ENCODE measurements at regions of chr17 and their contacts with region 1.

Region 1: GRCh38 chr17:42760652-42761581 is at the start of gene RAMP2:
- DNase-seq: no peak
- H3K4me3 ChIP-seq: peak within 1 kb of the TSS; percentile 47 to 58
- H3K27ac ChIP-seq: peak within 1 kb of the TSS; percentile 17 to 45
- H3K4me1 ChIP-seq: peaks cover 4 to 18% (median 14%) of the 10 kb centered on the region in 4 donors
- H3K27me3 ChIP-seq: peaks cover 0 to 42% of the 10 kb centered on the region in 2 donors
- CTCF ChIP-seq: no peak

Region 2: GRCh38 chr17:42586514-42587230 is 174.2 kb before region 1 on chr17:
- intact Hi-C with region 1: loop called (anchors 10 kb)
- DNase-seq: no peak
- H3K4me3 ChIP-seq: no peak overlapping the region
- H3K27ac ChIP-seq: no peak overlapping the region
- H3K4me1 ChIP-seq: peaks cover 0 to 13% (median 5%) of the 10 kb centered on the region in 4 donors
- H3K27me3 ChIP-seq: no peaks in the 10 kb centered on the region
- CTCF ChIP-seq: no peak

Region 3: DNA sequence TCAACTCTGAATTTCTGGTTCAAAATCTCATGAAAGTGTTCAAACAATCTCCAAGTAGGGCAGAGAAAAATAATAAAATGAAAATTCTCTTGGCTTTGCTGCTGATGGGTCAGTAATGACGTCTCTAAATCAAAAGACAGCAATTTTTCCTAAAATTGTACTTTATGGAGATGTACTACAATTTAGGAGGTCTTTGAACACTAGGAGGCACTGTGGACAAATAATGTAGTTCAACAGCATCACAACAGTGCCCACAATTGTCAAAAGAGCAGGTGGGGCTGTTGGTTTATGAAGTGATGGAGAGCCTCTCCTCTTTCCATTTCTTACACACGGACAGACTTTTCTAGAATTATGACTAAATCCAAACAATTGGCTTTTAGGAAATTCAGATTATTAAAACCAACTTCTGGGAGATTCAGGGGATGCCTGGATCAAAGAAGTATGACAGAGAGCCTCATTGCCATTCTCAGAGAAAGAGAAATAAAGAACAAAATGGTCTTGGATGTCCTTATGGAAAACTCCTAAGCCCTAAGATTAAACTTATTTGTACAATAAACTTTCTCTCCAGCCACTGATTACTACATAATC is 39.8 kb before region 1 on chr17:
- intact Hi-C with region 1: loop called (anchors 5 kb)
- DNase-seq: no peak
- H3K4me3 ChIP-seq: no peak overlapping the region
- H3K27ac ChIP-seq: no peak overlapping the region
- H3K4me1 ChIP-seq: no peaks in the 10 kb centered on the region
- H3K27me3 ChIP-seq: no peaks in the 10 kb centered on the region
- CTCF ChIP-seq: peak; percentile 57 to 68

Measured in tibial artery (tissue), 4 donors.